ENCODE measurements at regions of chr18 and their contacts with region 1.

Region 1: DNA sequence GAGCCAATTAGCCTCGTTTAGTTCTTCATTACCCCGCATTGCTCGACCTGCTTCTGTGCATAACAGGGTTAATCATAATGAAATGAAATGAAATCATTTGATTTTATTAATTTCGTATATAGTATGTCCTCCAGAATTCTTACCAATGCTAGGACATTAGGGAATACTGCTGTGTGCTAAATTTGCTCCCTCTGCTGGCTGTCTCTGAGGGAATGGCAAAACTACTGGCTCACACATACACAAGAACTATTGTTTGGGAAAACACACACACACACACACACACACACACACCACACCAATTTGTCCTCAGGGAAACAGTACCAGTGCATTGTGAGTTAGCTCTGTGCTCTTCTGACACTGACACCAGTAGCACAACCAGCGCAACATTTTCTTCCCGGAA is 273.3 kb upstream of the TCF4 start:
- DNase-seq: no peak
- ATAC-seq: peak in 2 of 8 donors; percentile 33 to 51
- H3K4me3 ChIP-seq: no peak overlapping the region
- H3K27ac ChIP-seq: no peak overlapping the region
- H3K4me1 ChIP-seq: peaks cover 0 to 30% (median 14%) of the 10 kb centered on the region in 9 donors
- H3K27me3 ChIP-seq: no peaks in the 10 kb centered on the region
- CTCF ChIP-seq: peak in 7 of 9 donors; percentile 38 to 58 (median 45)

Region 2: GRCh38 chr18:55243857-55244256 is 617.4 kb before region 1 on chr18:
- intact Hi-C with region 1: loop called in 6 of 10 experiments (anchors 5 to 10 kb)
- DNase-seq: peak in 1 of 2 donors; percentile 89
- ATAC-seq: peak; percentile 75 to 91 (median 84)
- H3K4me3 ChIP-seq: peak overlapping the region in 1 of 10 donors; percentile 9
- H3K27ac ChIP-seq: peak overlapping the region; percentile 55 to 89 (median 76)
- H3K4me1 ChIP-seq: peaks cover 21 to 100% (median 80%) of the 10 kb centered on the region in 9 donors
- H3K27me3 ChIP-seq: no peaks in the 10 kb centered on the region
- CTCF ChIP-seq: no peak

Region 3: GRCh38 chr18:55343396-55344073 is 517.7 kb before region 1 on chr18:
- intact Hi-C with region 1: loop called in 2 of 10 experiments (anchors 10 kb)
- DNase-seq: no peak
- ATAC-seq: peak in 5 of 8 donors; percentile 46 to 67 (median 57)
- H3K4me3 ChIP-seq: no peak overlapping the region
- H3K27ac ChIP-seq: peak overlapping the region in 1 of 10 donors; percentile 1
- H3K4me1 ChIP-seq: peaks cover 2 to 66% (median 24%) of the 10 kb centered on the region in 9 donors
- H3K27me3 ChIP-seq: no peaks in the 10 kb centered on the region
- CTCF ChIP-seq: peak; percentile 24 to 73 (median 61)

Region 4: DNA sequence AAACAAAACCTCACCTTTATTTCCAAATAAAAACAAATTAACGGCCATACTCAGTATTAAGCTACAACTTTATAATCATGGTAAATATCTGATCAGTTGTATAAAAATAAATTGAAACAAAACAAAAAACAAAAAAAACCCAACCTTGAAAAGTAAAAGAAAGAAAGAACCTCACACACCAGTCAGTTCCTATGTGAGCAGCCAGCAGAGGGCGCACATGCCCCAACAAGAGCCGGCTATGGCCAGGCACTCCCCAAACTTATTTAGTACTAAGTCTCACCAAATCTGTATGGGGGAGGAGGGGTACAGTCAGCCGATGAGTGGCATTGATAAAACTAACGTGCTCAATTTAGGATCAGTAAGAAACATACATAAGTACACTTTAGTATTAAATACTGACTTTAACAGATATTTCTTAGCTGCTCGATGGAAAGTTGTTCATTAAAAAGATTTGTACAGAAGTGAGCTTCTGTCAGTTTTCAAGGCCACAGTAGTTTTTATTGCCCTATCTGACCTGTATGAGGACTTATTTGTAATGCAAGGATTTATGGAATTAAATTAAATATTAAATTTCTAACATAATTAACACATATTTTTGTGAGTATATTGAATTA is 445.9 kb before region 1 on chr18:
- intact Hi-C with region 1: loop called in 5 of 10 experiments (anchors 5 to 10 kb)
- DNase-seq: peak; percentile 88 to 91
- ATAC-seq: peak; percentile 87 to 93 (median 90)
- H3K4me3 ChIP-seq: no peak overlapping the region
- H3K27ac ChIP-seq: peak overlapping the region in 5 of 10 donors; percentile 14 to 91 (median 54)
- H3K4me1 ChIP-seq: peaks cover 0 to 78% (median 56%) of the 10 kb centered on the region in 9 donors
- H3K27me3 ChIP-seq: no peaks in the 10 kb centered on the region
- CTCF ChIP-seq: peak; percentile 82 to 98 (median 92)

Region 5: DNA sequence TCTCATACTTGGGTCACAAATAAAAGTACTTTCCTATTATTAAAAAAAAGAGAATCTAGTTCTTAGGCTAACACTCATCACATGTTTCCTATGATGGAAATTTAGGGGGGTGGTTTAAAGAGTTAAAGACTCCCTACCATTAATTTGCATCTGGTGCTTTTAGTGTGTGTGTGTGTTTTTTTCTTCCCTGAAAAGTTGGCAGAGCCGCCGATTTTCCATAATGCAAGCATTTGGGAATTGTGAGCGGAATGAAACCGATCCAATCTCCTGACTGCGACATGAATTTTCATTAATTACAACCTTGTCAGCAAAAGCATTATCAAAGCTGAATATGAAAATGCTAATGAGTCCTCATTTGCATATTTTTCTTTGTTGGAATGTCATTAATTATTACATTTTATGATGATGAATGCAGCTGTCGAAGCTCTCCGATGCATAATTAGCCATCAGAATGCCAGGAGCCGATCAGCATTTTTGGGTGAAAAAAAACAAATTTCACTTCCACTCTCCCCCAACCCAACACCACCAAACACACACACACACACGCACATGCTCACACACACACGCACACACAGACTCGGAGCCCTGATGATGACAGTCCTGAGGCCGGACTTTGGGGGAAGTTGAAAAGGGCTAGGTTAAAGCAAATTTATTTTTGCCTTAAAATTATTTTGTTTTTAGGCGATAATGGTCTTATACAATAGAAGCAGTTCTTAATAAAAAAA is 438.6 kb before region 1 on chr18:
- intact Hi-C with region 1: loop called in 5 of 10 experiments (anchors 5 to 10 kb)
- DNase-seq: peak; percentile 27 to 82
- ATAC-seq: peak in 6 of 8 donors; percentile 56 to 75 (median 68)
- H3K4me3 ChIP-seq: peak overlapping the region in 9 of 10 donors; percentile 15 to 53 (median 46)
- H3K27ac ChIP-seq: peak overlapping the region; percentile 73 to 92 (median 80)
- H3K4me1 ChIP-seq: peaks cover 0 to 46% (median 25%) of the 10 kb centered on the region in 9 donors
- H3K27me3 ChIP-seq: no peaks in the 10 kb centered on the region
- CTCF ChIP-seq: no peak

Region 6: DNA sequence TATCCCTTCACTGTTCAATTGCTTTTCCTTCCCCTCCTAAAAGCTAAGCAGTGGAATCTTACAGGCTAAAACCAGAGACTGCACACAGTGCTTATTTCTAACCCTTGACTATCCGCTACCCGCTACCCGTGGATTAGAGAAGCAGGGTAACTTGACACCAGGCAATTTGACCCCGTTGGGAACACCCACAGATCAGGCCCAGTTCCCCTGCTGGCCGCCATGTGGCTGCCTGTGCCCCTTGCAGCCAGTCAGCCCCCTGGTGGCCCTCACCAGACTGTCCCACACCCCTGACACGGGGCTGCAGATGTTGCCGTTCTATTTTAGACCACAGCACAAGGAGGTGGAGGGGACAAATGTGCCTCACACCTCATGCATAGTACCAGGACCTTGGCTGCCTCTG is 702.3 kb after region 1 on chr18:
- intact Hi-C with region 1: loop called in 1 of 10 experiments (anchors 10 kb)
- DNase-seq: no peak
- ATAC-seq: peak in 1 of 8 donors; percentile 31
- H3K4me3 ChIP-seq: no peak overlapping the region
- H3K27ac ChIP-seq: no peak overlapping the region
- H3K4me1 ChIP-seq: peaks cover 0 to 18% (median 0%) of the 10 kb centered on the region in 9 donors
- H3K27me3 ChIP-seq: no peaks in the 10 kb centered on the region
- CTCF ChIP-seq: peak in 2 of 9 donors; percentile 17 to 19